ENCODE measurements at regions of chr17 and their contacts with region 1.

Region 1: GRCh38 chr17:8572764-8573163 is 57.8 kb downstream of the MYH10 start:
- DNase-seq: no peak
- H3K4me3 ChIP-seq: no peak overlapping the region
- H3K27ac ChIP-seq: no peak overlapping the region
- H3K4me1 ChIP-seq: no peaks in the 10 kb centered on the region
- H3K27me3 ChIP-seq: no peaks in the 10 kb centered on the region
- CTCF ChIP-seq: peak in 2 of 4 experiments; percentile 33 to 42
- POLR2A ChIP-seq: no peak

Region 2: DNA sequence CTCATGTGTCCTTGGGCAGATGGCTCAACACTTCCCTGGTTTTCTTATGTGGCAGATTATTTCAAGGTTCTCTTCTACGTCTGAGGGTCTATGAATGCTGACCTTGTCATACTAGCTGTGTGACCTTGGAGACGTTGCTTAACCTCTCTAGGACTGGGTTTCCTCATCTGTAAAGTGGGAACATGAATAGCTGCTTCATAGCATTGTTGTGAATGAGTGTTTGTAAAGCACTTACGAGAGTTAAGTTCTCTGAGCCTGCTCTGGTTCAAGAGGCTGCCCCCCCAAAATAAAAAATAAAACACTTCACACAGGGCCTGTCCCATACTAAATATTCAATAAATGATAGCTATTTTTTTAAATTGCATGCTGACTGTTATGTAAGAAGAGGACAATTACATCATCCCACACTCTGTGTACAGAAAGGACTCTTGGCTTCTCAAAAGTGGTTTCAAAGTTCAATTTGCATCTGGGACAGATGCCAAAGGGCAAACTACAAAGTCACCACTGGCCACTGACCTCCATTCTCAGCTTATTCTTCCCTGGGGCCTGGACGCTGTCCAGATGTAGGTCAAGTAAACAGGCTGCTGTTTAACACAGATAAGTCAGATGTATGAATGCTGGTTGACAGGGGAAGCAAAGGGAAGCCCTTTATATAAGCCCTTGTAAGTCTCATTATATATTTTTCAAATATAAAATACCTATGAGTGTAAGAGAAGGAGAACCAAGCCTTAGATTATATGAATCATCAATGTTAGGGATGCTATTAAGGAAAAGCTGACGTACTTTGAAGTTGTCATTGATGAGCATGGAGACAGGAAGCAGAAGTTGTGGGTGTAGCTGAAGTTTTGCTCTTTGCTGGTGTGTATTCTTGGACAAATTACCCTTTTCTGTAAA is 152.5 kb before region 1 on chr17:
- intact Hi-C with region 1: no loop called
- DNase-seq: peak in 1 of 2 donors; percentile 55
- H3K4me3 ChIP-seq: no peak overlapping the region
- H3K27ac ChIP-seq: peak overlapping the region in 1 of 2 donors; percentile 10
- H3K4me1 ChIP-seq: no peaks in the 10 kb centered on the region
- H3K27me3 ChIP-seq: no peaks in the 10 kb centered on the region
- CTCF ChIP-seq: no peak
- POLR2A ChIP-seq: no peak

Region 3: DNA sequence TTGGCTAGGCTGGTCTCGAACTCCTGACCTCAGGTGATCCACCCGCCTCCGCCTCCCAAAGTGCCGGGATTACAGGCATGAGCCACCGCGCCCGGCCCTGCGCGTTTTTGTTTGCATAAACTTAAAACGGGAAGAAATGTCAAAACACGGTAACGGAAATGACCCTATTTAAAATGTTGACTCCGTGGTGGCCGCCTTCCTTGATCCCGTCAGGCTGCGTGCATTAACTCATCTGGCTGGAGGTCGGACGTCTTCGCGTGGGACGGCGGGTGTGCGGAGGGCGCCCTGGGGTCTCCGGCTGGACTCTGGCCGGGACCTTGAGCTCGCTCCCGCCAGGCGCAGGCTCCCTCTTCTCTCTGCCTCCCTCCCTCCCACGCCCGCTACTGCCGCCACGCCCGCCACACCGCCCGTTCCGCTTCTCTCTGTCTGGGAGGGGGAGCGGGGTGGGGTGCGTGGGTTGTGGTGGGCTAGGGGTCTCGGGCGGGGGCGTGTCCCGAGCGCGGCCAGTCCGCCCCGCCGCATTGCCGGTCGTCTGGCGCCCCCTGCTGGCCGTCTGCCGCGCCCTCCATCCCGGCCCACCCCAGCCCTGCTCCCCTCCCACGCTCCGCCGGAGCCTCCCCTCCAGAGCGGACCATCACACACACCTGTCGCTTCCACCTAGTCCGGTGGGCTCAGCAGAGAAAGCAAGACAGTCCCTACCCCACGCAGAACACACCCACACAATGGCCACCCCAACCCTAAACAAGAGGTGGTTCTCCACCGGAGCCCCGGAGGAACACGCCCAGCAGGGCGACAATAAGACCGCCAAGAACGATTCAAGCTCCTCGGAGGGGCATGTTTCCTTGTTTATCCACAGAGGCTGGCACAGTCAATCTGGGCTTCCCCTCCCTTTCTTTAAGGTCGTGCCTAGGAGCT is 173.1 kb after region 1 on chr17:
- intact Hi-C with region 1: loop called (anchors 10 kb)
- DNase-seq: peak; percentile 64 to 77
- H3K4me3 ChIP-seq: peak overlapping the region; percentile 53 to 65
- H3K27ac ChIP-seq: peak overlapping the region; percentile 51 to 59
- H3K4me1 ChIP-seq: no peaks in the 10 kb centered on the region
- H3K27me3 ChIP-seq: no peaks in the 10 kb centered on the region
- CTCF ChIP-seq: peak; percentile 74 to 99 (median 92)
- POLR2A ChIP-seq: peak in 1 of 2 donors; percentile 9